ENCODE measurements at regions of chr11 and their contacts with region 1.

Region 1: DNA sequence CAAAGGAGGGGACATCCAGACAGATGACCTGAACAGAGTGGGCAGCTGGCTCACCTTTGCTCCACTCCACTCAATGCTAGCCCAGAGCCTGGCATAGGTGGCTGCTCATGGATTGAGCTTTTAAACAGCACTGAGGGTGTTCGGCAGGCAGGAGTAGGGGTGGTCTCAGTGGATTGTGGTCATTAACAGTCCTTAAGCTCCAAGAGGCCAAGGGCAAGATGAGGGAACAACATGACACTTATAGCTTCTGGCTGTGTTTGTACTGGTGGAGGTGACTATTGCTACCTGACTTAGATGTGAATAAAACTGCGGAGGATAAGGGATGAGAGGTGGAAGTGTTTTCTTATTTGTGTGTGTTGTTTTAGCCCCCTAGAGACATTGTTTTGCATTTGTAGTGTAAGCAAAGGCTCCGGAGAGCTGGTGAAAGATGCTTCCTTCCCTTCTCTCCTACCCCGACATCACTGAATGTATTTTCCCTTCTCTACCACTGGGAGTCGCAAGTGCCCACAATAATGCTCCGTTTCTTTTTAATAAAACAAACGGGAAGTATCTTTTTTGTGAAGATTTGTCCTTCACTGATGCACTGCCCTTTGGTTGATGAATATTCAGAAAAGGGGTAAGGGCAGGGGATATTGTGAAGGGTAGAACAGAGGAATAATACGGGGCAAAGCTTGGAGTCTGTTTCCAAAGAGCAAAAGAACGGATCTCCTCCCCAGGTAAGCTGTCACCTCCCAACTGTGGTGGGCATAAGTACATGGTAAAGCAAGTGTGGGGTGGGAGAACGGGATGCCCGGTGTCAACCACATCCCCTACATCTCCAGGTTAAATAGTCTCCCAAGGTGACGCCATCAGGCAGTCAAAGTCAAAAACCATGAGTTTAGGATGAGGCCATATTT is 27.5 kb upstream of the MTNR1B start:
- DNase-seq: no peak
- H3K4me3 ChIP-seq: no peak overlapping the region
- H3K27me3 ChIP-seq: 0 out of 2 replicates have a peak, but pooled peaks cover 2% of the 10 kb centered on the region
- CTCF ChIP-seq: peak; percentile 71

Region 2: GRCh38 chr11:92753151-92753550 is 188.8 kb before region 1 on chr11:
- CTCF ChIA-PET with region 1: no interaction called
- POLR2A ChIA-PET with region 1: no interaction called
- DNase-seq: no peak
- H3K4me3 ChIP-seq: no peak overlapping the region
- H3K27me3 ChIP-seq: no peaks in the 10 kb centered on the region
- CTCF ChIP-seq: no peak

Region 3: GRCh38 chr11:92907671-92908070 is 34.3 kb before region 1 on chr11:
- CTCF ChIA-PET with region 1: no interaction called
- POLR2A ChIA-PET with region 1: no interaction called
- DNase-seq: no peak
- H3K4me3 ChIP-seq: no peak overlapping the region
- H3K27me3 ChIP-seq: no peaks in the 10 kb centered on the region
- CTCF ChIP-seq: no peak

Region 4: DNA sequence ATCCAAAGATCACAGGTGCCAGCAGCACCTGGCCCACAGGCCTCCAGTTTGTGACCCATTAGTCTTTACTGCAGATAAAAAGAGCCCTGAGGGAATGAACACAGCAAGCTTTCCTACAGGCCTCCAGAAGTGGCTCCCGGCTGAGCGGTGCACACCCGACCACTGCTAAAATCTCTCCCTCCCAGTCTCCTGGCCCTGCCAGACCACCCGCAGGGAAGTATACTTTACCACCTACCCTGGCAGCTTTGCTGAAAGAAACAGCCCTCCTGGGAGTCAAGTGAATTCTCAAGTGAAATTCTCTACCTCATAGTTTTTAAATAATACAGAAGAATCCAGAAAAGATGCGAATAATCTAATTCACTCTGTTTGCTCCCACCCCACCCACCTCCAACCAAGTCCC is 12.1 kb after region 1 on chr11:
- CTCF ChIA-PET with region 1: interaction called, 21 read pairs
- POLR2A ChIA-PET with region 1: no interaction called
- DNase-seq: no peak
- H3K4me3 ChIP-seq: no peak overlapping the region
- H3K27me3 ChIP-seq: 0 out of 2 replicates have a peak, but pooled peaks cover 2% of the 10 kb centered on the region
- CTCF ChIP-seq: no peak

Region 5: DNA sequence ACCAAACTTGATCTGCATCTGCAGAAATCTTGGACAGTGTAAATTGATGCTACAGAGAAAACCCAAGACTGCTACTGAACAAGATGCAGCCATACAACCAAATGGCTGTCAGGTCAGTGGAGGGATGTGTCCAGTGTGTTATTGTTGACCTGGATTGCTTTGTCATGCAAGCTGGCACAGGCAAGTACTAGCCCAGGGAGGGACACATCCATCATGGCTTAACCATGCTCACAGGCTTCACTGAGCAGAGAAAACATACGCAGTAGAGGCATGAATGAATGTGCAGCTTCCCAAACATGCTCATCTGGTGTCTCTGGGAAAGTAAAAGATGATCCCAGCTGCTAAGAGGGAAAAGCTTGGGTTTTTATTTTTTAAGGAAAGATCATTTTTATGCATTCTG is 121.2 kb after region 1 on chr11:
- CTCF ChIA-PET with region 1: interaction called, 17 read pairs
- POLR2A ChIA-PET with region 1: no interaction called
- DNase-seq: no peak
- H3K4me3 ChIP-seq: no peak overlapping the region
- H3K27me3 ChIP-seq: no peaks in the 10 kb centered on the region; the same call in 1 of the 2 replicates
- CTCF ChIP-seq: no peak

Region 6: DNA sequence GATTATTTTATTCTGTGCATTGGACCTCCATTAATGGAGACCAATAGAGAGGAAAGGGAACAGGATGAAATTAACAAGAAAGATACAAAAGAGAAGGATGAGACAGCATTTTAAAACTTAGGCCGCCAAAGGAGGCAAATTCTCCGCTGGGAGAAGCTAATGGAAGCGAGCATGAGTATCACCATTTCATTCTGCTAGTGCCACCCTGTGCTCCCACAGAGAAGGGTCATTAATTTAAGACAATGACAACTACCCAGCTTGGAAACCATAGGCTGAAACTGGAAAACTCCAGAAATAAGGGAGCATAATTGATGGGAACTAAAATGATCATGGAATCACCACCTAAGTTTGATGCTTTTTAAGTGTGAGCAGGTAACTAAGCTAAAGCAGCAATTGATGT is 186.7 kb after region 1 on chr11:
- CTCF ChIA-PET with region 1: no interaction called
- POLR2A ChIA-PET with region 1: no interaction called
- DNase-seq: no peak
- H3K4me3 ChIP-seq: no peak overlapping the region
- H3K27me3 ChIP-seq: no peaks in the 10 kb centered on the region; the same call in 1 of the 2 replicates
- CTCF ChIP-seq: no peak

Region 7: GRCh38 chr11:93169950-93170561 is 228.1 kb after region 1 on chr11:
- CTCF ChIA-PET with region 1: interaction called, 22 read pairs
- POLR2A ChIA-PET with region 1: no interaction called
- DNase-seq: no peak
- H3K4me3 ChIP-seq: no peak overlapping the region
- H3K27me3 ChIP-seq: no peaks in the 10 kb centered on the region
- CTCF ChIP-seq: peak; percentile 43; the same call in 1 of the 2 replicates

Region 8: GRCh38 chr11:93225662-93226061 is 283.7 kb after region 1 on chr11:
- CTCF ChIA-PET with region 1: interaction called, 69 read pairs
- POLR2A ChIA-PET with region 1: no interaction called
- DNase-seq: no peak
- H3K4me3 ChIP-seq: no peak overlapping the region
- H3K27me3 ChIP-seq: no peaks in the 10 kb centered on the region
- CTCF ChIP-seq: peak; percentile 20; the same call in 1 of the 2 replicates

Region 9: GRCh38 chr11:93234602-93235207 is 292.8 kb after region 1 on chr11:
- CTCF ChIA-PET with region 1: interaction called, 29 read pairs
- POLR2A ChIA-PET with region 1: no interaction called
- DNase-seq: peak; percentile 13
- H3K4me3 ChIP-seq: no peak overlapping the region
- H3K27me3 ChIP-seq: peaks cover 6% of the 10 kb centered on the region
- CTCF ChIP-seq: peak; percentile 94

Region 10: DNA sequence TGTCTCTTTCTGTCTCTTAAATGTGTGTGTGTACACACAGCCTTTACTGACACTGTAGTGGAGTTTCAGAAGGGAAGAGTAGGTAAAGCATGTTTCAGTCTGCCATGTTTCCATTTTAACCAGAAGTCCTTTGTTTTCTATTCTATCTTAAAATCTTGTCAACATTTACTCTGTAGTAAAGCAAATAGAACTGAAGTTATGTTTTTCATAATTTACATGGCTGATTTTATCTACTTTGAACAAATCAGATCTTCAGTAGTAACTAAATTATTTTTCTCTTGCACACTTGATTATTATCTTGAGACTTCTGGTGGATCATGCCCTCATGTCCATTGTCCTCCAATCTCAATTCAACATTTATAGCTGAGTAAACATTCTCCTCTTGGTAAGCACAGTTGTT is 375.2 kb after region 1 on chr11:
- CTCF ChIA-PET with region 1: no interaction called
- POLR2A ChIA-PET with region 1: no interaction called
- DNase-seq: no peak
- H3K4me3 ChIP-seq: no peak overlapping the region
- H3K27me3 ChIP-seq: no peaks in the 10 kb centered on the region
- CTCF ChIP-seq: no peak